OCI-LY7 (cell line): ENCODE measurements at regions of chr12 and their contacts with region 1.

Region 1: GRCh38 chr12:110742718-110743570 is at the start of gene PPP1CC:
- DNase-seq: peak; percentile 98
- H3K4me3 ChIP-seq: peak within 1 kb of the TSS; percentile 86
- H3K27ac ChIP-seq: peak within 1 kb of the TSS; percentile 62
- H3K4me1 ChIP-seq: peaks cover 40% of the 10 kb centered on the region
- CTCF ChIP-seq: no peak
- total RNA-seq, gene PPP1CC: 140 and 146 TPM in 2 replicates

Region 2: DNA sequence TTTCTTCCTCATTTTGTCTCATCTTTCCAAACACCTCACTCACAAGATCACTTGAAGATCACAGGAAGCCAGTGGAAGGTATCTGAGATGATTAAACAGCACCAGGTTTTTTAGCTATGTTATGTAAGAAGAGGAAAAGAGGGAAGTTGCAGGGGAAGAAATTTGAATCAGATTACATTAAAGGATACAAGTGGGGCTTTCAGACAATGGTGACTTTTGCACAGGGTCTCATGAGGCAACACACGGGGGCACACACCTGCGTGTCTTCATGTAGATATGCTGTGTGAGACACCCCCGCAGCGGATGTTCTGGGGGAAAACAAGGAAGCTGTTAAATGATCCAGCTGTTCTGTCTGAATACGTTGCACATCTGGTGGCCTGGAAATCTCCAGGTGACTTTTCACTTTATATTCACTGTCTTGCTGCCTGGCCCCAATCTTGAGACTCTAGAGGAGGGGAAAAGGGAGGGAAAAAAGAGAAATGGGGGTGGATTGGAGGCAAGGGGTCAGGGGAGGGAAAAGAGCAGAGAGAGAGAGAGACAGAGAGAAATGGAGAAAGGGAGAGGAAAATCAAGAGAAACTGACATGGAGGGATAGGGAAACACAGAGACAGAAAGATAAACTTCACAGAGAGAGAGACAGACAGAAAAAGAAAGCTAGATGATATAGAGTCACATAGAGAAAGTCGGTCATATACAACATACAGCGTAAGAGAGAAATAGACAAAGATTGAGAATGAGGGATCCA is 36.1 kb after region 1 on chr12:
- CTCF ChIA-PET with region 1: no interaction called
- POLR2A ChIA-PET with region 1: interaction called, 4 read pairs
- intact Hi-C with region 1: loop called (anchors 2 kb)
- DNase-seq: peak; percentile 95
- H3K4me3 ChIP-seq: peak overlapping the region; percentile 33
- H3K27ac ChIP-seq: peak overlapping the region; percentile 90
- H3K4me1 ChIP-seq: peaks cover 94% of the 10 kb centered on the region
- CTCF ChIP-seq: peak; percentile 62

Region 3: DNA sequence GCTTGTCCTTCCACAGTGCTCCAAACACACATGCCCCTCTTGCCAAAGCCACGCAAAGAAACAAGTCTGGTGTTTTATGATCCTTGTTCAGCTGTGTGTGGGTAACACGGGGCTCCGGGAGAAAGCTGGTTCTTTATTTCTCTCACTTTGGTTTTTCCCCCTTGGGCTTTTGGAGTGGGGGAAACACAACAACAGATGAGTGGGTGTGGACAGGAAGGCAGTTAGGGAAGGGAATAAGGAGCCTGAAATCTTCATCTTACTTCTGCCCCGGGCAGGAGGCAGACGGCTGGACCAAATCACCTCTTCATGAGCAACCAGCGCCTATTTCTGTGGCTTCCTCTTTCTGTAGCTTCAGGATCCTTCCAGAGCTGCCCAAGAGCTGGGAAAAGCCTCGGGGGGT is 407.4 kb after region 1 on chr12:
- CTCF ChIA-PET with region 1: no interaction called
- POLR2A ChIA-PET with region 1: no interaction called
- intact Hi-C with region 1: no loop called
- DNase-seq: no peak
- H3K4me3 ChIP-seq: no peak overlapping the region
- H3K27ac ChIP-seq: no peak overlapping the region
- H3K4me1 ChIP-seq: no peaks in the 10 kb centered on the region
- CTCF ChIP-seq: no peak